Activated T-helper 2 cell treated with anti-CD3 and anti-CD28 coated beads, Interferon-gamma antibody, Interleukin-2, Interleukin-4, amounts not matched to agents 10 μg/mL and 5 μg/mL and 100 μg/mL, durations not matched to agents 14 hours and 24 hours and 36 hours (primary cell): ENCODE measurements at regions of chr11 and their contacts with region 1.

Region 1: DNA sequence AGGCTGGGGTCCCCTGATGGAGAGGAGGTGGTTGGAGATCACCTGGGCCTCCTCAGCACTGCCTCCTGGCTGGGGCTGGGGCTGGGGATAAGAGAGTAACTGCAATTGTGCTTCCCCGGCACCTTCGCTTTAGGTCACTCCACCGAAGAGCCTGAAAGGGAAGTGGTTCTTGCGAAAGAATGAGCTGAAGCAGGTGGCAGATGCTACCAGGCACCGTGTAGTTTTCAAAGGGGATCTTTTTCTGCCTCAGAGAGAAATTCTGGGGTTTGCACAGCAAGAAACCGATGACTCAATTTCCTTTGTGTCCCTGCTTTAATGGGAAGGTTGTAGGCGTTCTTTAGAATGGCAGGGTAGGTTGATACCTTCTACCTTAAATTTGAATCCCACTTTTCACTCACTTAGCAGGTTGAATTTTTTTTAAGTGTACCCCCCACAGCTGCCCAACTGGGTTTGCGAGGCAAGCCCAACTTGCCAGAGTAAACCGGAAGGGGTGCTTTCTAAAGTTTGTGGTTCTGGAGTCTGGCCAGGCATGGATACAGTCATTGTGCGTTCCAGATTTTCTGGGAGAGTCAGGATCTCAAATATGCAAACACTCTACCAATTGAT is 5.3 kb downstream of the CD44 start:
- DNase-seq: peak; percentile 62
- H3K4me3 Mint-ChIP-seq: peak overlapping the region; percentile 58
- H3K27ac Mint-ChIP-seq: peak overlapping the region; percentile 95
- H3K4me1 Mint-ChIP-seq: peaks cover 69% of the 10 kb centered on the region
- H3K27me3 Mint-ChIP-seq: no peaks in the 10 kb centered on the region

Region 2: DNA sequence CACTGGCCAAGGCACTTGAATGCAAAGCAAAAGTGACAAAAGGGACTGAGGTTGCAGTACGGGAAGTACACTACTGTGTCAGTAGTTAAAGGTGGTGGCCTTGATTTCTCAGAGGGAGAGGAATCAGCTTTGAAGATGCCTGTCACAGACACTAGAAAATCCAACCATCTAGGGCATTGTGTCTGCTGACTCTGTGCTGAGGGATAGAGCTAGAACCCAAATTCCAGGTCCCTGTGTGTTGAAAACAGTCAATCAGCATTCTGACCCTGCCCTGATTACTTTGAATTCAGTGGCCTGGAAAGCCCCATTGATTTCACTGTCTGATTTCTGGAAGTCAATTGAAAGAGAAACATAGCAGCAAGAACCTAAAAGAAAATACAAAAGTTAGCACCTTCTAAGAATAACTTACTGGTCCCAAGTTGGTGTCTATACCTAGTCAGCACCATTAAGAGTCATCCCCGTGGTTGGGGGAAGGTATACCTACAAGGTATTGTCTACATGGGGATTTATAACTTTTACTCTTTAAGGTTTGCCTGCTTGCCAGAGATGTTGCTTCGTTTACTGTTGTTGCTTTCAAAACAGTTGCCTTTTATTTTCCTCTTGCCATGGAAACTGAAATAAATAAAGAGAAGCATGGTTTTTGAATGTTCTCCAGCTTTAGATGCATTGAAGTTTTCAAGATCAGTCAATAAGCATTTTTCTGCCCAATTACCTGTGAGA is 130.6 kb before region 1 on chr11:
- intact Hi-C with region 1: loop called (anchors 1 kb)
- DNase-seq: peak; percentile 24
- H3K4me3 Mint-ChIP-seq: no peak overlapping the region
- H3K27ac Mint-ChIP-seq: peak overlapping the region; percentile 72
- H3K4me1 Mint-ChIP-seq: peaks cover 54% of the 10 kb centered on the region
- H3K27me3 Mint-ChIP-seq: peaks cover 20% of the 10 kb centered on the region

Region 3: DNA sequence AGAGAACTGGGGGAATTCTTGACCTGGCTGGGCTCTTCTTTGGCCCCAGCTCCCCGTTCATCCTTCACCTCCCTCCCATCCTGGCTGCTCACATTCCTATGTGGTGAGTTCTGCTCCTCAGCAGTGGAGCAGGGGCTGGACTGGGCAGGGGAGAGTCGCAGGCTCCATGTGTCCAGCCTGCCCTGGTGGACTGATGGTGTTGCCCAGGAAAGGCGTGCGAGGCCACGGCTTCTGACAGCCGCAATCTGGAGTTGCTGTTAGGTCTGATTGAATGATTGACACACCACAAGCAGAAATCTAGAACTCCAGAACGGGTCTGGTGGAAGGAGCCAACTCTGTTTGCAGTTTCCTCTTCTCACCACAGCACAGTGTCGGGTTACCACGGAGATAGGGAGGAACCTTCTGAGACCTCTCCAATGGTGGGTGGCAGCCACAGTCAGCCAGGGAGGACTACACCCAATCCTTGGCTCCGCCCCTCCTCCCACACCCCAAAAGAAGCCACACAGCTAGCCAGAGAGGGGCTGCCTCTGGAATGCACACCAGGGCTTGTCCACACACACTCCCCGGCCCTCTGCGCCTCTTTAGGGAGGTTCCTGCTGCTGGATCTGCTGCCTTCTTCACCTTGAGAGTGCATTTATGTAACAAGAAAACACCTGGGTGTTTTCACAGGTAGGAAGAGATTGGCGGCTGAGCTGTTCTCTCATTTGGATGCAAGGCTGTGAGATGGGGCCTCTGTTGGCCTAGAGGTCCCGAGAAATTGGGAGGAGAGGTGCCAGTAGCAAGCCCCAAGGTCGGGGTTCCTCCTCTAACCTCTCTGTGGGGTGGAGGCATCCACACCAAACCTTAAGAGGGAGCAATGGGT is 61.7 kb before region 1 on chr11:
- intact Hi-C with region 1: loop called (anchors 1 kb)
- DNase-seq: peak; percentile 83
- H3K4me3 Mint-ChIP-seq: peak overlapping the region; percentile 33
- H3K27ac Mint-ChIP-seq: peak overlapping the region; percentile 55
- H3K4me1 Mint-ChIP-seq: peaks cover 81% of the 10 kb centered on the region
- H3K27me3 Mint-ChIP-seq: no peaks in the 10 kb centered on the region

Region 4: GRCh38 chr11:35100013-35100383 is 44.2 kb before region 1 on chr11:
- intact Hi-C with region 1: no loop called
- DNase-seq: no peak
- H3K4me3 Mint-ChIP-seq: no peak overlapping the region
- H3K27ac Mint-ChIP-seq: no peak overlapping the region
- H3K4me1 Mint-ChIP-seq: peaks cover 6% of the 10 kb centered on the region
- H3K27me3 Mint-ChIP-seq: peaks cover 26% of the 10 kb centered on the region

Region 5: GRCh38 chr11:35173011-35173511 is 28.8 kb after region 1 on chr11:
- intact Hi-C with region 1: loop called (anchors 1 kb)
- DNase-seq: no peak
- H3K4me3 Mint-ChIP-seq: no peak overlapping the region
- H3K27ac Mint-ChIP-seq: peak overlapping the region; percentile 75
- H3K4me1 Mint-ChIP-seq: peaks cover 91% of the 10 kb centered on the region
- H3K27me3 Mint-ChIP-seq: no peaks in the 10 kb centered on the region

Region 6: GRCh38 chr11:35343033-35343598 is 198.9 kb after region 1 on chr11:
- intact Hi-C with region 1: loop called (anchors 2 kb)
- DNase-seq: peak; percentile 74
- H3K4me3 Mint-ChIP-seq: peak overlapping the region; percentile 20
- H3K27ac Mint-ChIP-seq: peak overlapping the region; percentile 81
- H3K4me1 Mint-ChIP-seq: peaks cover 46% of the 10 kb centered on the region
- H3K27me3 Mint-ChIP-seq: no peaks in the 10 kb centered on the region